ENCODE measurements at regions of chr9 and their contacts with region 1.

Region 1: DNA sequence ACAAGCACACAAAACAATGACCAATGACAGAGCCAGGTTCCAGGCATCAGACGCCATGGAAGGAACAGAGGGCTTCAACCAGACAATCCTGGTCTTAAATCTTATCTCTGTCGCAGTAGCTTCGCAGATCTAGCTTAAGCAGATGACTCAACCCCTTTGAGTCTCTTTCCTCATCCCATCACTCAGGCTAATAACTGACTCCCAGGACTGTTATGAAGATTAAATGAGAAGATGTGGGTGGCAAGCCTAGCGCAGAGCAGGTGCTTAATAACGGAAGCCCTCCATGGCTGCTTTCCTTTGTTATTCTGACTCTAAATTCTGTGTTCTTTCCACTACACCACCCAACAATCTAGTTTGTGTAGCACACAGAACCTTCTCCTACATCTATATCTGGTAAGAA is 110.9 kb downstream of the SLC24A2 start:
- DNase-seq: no peak
- ATAC-seq: no peak
- H3K4me3 ChIP-seq: no peak overlapping the region
- H3K27ac ChIP-seq: no peak overlapping the region
- H3K4me1 ChIP-seq: no peaks in the 10 kb centered on the region
- H3K27me3 ChIP-seq: peaks cover 14% of the 10 kb centered on the region; the same call in 1 of the 2 replicates
- CTCF ChIP-seq: no peak
- POLR2A ChIP-seq: no peak
- RAD21 ChIP-seq: no peak

Region 2: GRCh38 chr9:18874069-18874468 is 803.9 kb before region 1 on chr9:
- CTCF ChIA-PET with region 1: no interaction called
- POLR2A ChIA-PET with region 1: no interaction called
- RAD21 ChIA-PET with region 1: no interaction called
- intact Hi-C with region 1: loop called (anchors 10 kb)
- DNase-seq: no peak
- ATAC-seq: no peak
- H3K4me3 ChIP-seq: no peak overlapping the region
- H3K27ac ChIP-seq: no peak overlapping the region
- H3K4me1 ChIP-seq: no peaks in the 10 kb centered on the region
- H3K27me3 ChIP-seq: peaks cover 16% of the 10 kb centered on the region
- CTCF ChIP-seq: no peak
- POLR2A ChIP-seq: no peak
- RAD21 ChIP-seq: no peak

Region 3: DNA sequence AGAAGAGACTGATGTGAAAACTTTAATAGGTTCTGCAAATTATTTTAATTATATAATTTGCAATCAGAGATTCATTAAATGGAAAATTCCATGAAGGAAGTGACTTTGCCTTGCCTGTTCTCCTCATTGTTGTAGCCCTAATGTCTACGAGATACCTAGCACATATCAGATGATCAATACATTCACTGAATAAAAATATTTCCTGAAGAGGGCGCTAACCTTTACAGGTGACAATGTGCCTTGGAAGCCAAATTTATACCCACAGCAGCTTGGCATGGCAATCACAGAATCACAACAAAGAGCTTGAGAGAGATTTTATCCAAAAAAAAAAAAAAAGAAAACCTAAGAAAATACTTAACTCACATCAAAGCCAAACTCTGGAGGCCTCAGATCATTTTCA is 592.6 kb before region 1 on chr9:
- CTCF ChIA-PET with region 1: no interaction called
- POLR2A ChIA-PET with region 1: no interaction called
- RAD21 ChIA-PET with region 1: no interaction called
- intact Hi-C with region 1: no loop called
- DNase-seq: peak; percentile 22
- ATAC-seq: peak; percentile 79
- H3K4me3 ChIP-seq: no peak overlapping the region
- H3K27ac ChIP-seq: no peak overlapping the region
- H3K4me1 ChIP-seq: no peaks in the 10 kb centered on the region
- H3K27me3 ChIP-seq: no peaks in the 10 kb centered on the region
- CTCF ChIP-seq: peak; percentile 34 to 66 (median 43); a peak in 4 of 6 replicates
- POLR2A ChIP-seq: no peak
- RAD21 ChIP-seq: peak; percentile 55

Measured in HCT116 (cell line).